Pancreas (tissue), 10 donors: ENCODE measurements at regions of chr6 and their contacts with region 1.

Region 1: DNA sequence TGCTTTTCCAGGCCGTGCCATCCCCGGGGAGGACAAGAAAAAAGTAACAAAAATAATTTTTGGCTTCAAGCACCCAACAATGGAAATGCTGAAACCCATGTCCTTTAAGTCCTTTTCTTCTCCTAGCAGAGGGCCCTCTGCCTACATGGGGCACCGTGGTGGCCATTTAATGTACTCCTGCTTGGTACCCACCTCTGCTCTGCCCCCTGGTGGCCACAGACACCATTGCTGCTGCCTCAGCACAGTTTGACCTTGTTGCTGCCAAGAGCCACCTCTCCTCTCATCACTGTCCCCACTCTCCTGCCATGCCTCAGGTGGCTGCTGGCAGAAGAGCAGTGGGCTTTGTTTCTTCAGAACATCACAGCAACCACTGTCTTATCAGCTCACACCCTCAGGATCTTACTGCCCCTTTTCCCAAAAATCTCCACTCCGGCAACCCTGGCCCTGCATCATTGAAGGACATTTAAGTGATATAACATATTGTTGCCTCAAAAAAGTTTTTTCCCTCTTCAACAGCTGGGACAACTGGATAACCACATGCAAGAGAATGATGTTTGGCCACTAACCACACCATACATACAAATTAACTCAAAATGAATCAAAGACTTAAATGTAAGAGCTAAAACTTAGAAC is 12.9 kb upstream of the ARMC2 start:
- DNase-seq: peak; percentile 80 to 94 (median 90)
- ATAC-seq: peak; percentile 99 to 100 (median 99)
- H3K4me3 ChIP-seq: no peak overlapping the region
- H3K27ac ChIP-seq: no peak overlapping the region
- H3K4me1 ChIP-seq: no peaks in the 10 kb centered on the region
- H3K27me3 ChIP-seq: no peaks in the 10 kb centered on the region
- CTCF ChIP-seq: peak; percentile 93 to 97 (median 96)

Region 2: GRCh38 chr6:108541838-108542759 is 293.2 kb before region 1 on chr6:
- intact Hi-C with region 1: loop called in 2 of 3 experiments (anchors 5 kb)
- DNase-seq: peak in 5 of 6 donors; percentile 54 to 82 (median 59)
- ATAC-seq: peak; percentile 95 to 98 (median 97)
- H3K4me3 ChIP-seq: peak overlapping the region in 1 of 4 donors; percentile 9
- H3K27ac ChIP-seq: no peak overlapping the region
- H3K4me1 ChIP-seq: peaks cover 0 to 7% (median 0%) of the 10 kb centered on the region in 3 donors
- H3K27me3 ChIP-seq: no peaks in the 10 kb centered on the region
- CTCF ChIP-seq: peak; percentile 52 to 63 (median 61)

Region 3: GRCh38 chr6:108549732-108550131 is 285.6 kb before region 1 on chr6:
- intact Hi-C with region 1: loop called in 2 of 3 experiments (anchors 5 kb)
- DNase-seq: no peak
- ATAC-seq: no peak
- H3K4me3 ChIP-seq: no peak overlapping the region
- H3K27ac ChIP-seq: no peak overlapping the region
- H3K4me1 ChIP-seq: no peaks in the 10 kb centered on the region
- H3K27me3 ChIP-seq: no peaks in the 10 kb centered on the region
- CTCF ChIP-seq: no peak

Region 4: GRCh38 chr6:109073344-109074132 is 238.2 kb after region 1 on chr6:
- intact Hi-C with region 1: loop called in 1 of 3 experiments (anchors 10 kb)
- DNase-seq: peak in 2 of 6 donors; percentile 39 to 42
- ATAC-seq: peak in 3 of 4 donors; percentile 80 to 87 (median 83)
- H3K4me3 ChIP-seq: no peak overlapping the region
- H3K27ac ChIP-seq: no peak overlapping the region
- H3K4me1 ChIP-seq: peaks cover 0 to 11% (median 0%) of the 10 kb centered on the region in 3 donors
- H3K27me3 ChIP-seq: no peaks in the 10 kb centered on the region
- CTCF ChIP-seq: peak in 3 of 4 donors; percentile 31 to 43 (median 39)